MCF 10A (cell line): ENCODE measurements at regions of chr1 and their contacts with region 1.

Region 1: DNA sequence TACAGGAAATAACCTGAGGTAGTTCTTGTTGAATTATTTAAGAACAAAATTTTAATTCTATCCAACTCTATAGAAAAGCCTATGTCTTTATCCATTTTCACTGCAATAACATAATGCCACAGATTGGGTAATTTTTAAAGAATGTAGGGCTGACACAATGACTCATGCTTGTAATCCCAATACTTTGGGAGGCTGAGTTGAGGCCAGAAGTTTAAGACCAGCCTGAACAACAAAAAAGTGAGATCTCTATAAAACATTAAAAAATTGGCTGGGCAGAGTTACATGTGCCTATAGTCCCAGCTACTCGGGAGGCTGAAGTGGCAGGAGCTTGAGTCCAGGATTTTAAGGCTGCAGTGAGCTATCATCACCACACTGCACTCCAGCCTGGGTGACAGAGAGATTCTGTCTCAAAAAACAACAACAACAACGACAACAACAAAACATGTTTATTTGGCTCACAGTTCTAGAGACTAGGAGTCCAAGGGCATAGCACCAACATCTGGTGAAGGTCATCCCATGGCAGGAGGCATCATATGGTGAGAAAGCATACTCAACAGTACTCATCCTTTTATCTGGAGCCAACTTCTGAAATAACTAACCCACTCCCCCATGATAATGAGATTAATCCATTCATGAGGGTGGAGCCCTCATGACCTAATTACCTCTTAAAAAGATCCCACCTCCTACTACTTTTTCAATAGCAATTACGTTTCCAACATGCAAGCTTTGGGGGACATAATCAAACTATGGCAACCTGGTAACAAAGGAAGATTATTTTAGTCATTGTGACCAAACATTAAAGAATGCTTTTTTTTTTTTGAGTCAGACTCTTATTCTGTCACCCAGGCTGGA is 59.6 kb downstream of the ABL2 start:
- DNase-seq: peak; percentile 83
- H3K4me3 Mint-ChIP-seq: no peak overlapping the region
- H3K27ac Mint-ChIP-seq: peak overlapping the region; percentile 62
- H3K4me1 Mint-ChIP-seq: peaks cover 17% of the 10 kb centered on the region
- H3K27me3 Mint-ChIP-seq: no peaks in the 10 kb centered on the region
- CTCF ChIP-seq: no peak

Region 2: GRCh38 chr1:179151908-179152682 is 17.7 kb before region 1 on chr1:
- CTCF ChIA-PET with region 1: interaction called, 11 read pairs
- POLR2A ChIA-PET with region 1: interaction called, 5 read pairs
- intact Hi-C with region 1: no loop called
- DNase-seq: no peak
- H3K4me3 Mint-ChIP-seq: no peak overlapping the region
- H3K27ac Mint-ChIP-seq: no peak overlapping the region
- H3K4me1 Mint-ChIP-seq: peaks cover 15% of the 10 kb centered on the region
- H3K27me3 Mint-ChIP-seq: no peaks in the 10 kb centered on the region
- CTCF ChIP-seq: no peak

Region 3: DNA sequence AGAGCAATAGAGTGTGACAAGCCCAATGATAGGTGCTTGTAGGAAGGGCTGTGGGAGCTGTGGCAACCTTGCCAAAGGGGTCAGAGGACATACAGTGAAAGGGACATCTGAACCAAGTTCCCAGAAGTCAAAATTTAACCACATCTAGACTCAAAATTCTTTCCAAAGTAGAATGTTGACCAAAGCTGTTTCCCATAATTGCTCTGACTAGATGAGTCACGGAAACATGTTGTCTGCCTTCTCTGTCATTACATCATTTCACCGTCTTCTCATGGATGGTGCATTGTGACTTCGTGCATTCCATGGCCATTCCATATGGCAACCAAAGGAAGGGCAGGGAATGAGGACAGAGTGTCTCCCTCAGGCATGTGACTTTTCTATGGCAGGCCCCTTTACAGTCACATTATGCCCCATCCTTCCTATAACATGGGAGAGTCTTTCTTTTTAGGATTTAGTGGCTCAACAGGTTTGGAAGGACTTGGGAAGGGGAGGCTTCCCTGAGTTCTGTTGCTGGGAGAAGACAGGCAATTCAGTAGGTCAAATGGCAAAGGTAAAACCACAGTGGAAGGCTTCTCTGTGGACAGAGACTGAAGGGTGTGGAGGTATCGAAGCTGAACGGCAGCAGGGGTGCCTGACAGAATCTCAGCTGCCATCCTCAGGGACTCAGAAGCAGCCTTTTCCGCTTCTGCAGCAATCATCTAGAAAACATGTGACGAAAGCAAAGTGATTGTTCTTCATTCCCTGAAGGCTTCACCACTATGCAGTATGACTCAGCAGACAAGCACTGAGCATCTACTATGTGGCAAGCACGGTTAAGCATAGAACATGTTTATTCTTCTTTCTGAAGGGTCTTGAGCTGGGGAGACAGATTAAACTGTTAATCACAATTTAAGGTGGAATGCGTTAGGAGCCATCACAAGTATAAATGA is 381.2 kb after region 1 on chr1:
- CTCF ChIA-PET with region 1: no interaction called
- POLR2A ChIA-PET with region 1: no interaction called
- intact Hi-C with region 1: no loop called
- DNase-seq: peak; percentile 79
- H3K4me3 Mint-ChIP-seq: no peak overlapping the region
- H3K27ac Mint-ChIP-seq: no peak overlapping the region
- H3K4me1 Mint-ChIP-seq: peaks cover 14% of the 10 kb centered on the region
- H3K27me3 Mint-ChIP-seq: peaks cover 11% of the 10 kb centered on the region
- CTCF ChIP-seq: no peak